Pancreas (tissue), 10 donors: ENCODE measurements at regions of chr1 and their contacts with region 1.

Region 1: GRCh38 chr1:220879076-220879508 is at the start of gene HLX:
- DNase-seq: peak; percentile 58 to 86 (median 78)
- ATAC-seq: peak; percentile 83 to 89 (median 86)
- H3K4me3 ChIP-seq: peak within 1 kb of the TSS; percentile 64 to 80 (median 72)
- H3K27ac ChIP-seq: peak within 1 kb of the TSS; percentile 48 to 85 (median 74)
- H3K4me1 ChIP-seq: peaks cover 0 to 8% (median 7%) of the 10 kb centered on the region in 3 donors
- H3K27me3 ChIP-seq: no peaks in the 10 kb centered on the region
- CTCF ChIP-seq: no peak
- total RNA-seq, gene HLX: 0.74 to 3.8 (median 1.9) TPM

Region 2: GRCh38 chr1:220818421-220819173 is 60.5 kb before region 1 on chr1:
- intact Hi-C with region 1: no loop called
- DNase-seq: no peak
- ATAC-seq: peak in 3 of 4 donors; percentile 64 to 71 (median 65)
- H3K4me3 ChIP-seq: no peak overlapping the region
- H3K27ac ChIP-seq: no peak overlapping the region
- H3K4me1 ChIP-seq: no peaks in the 10 kb centered on the region
- H3K27me3 ChIP-seq: no peaks in the 10 kb centered on the region
- CTCF ChIP-seq: no peak

Region 3: GRCh38 chr1:220943319-220943996 is 64.4 kb after region 1 on chr1:
- intact Hi-C with region 1: no loop called
- DNase-seq: no peak
- ATAC-seq: no peak
- H3K4me3 ChIP-seq: no peak overlapping the region
- H3K27ac ChIP-seq: no peak overlapping the region
- H3K4me1 ChIP-seq: no peaks in the 10 kb centered on the region
- H3K27me3 ChIP-seq: no peaks in the 10 kb centered on the region
- CTCF ChIP-seq: no peak

Region 4: GRCh38 chr1:221203224-221204054 is 324.3 kb after region 1 on chr1:
- intact Hi-C with region 1: loop called in 1 of 3 experiments (anchors 10 kb)
- DNase-seq: peak; percentile 66 to 88 (median 81)
- ATAC-seq: peak; percentile 77 to 97 (median 91)
- H3K4me3 ChIP-seq: no peak overlapping the region
- H3K27ac ChIP-seq: peak overlapping the region in 1 of 4 donors; percentile 29
- H3K4me1 ChIP-seq: peaks cover 11 to 19% (median 19%) of the 10 kb centered on the region in 3 donors
- H3K27me3 ChIP-seq: no peaks in the 10 kb centered on the region
- CTCF ChIP-seq: peak; percentile 67 to 88 (median 76)

Region 5: GRCh38 chr1:221435504-221435904 is 556.4 kb after region 1 on chr1:
- intact Hi-C with region 1: loop called in 1 of 3 experiments (anchors 10 kb)
- DNase-seq: no peak
- ATAC-seq: peak in 3 of 4 donors; percentile 73 to 82 (median 79)
- H3K4me3 ChIP-seq: no peak overlapping the region
- H3K27ac ChIP-seq: no peak overlapping the region
- H3K4me1 ChIP-seq: peaks cover 0 to 11% (median 3%) of the 10 kb centered on the region in 3 donors
- H3K27me3 ChIP-seq: no peaks in the 10 kb centered on the region
- CTCF ChIP-seq: peak; percentile 79 to 93 (median 90)